MCF 10A (cell line): ENCODE measurements at regions of chr1 and their contacts with region 1.

Region 1: DNA sequence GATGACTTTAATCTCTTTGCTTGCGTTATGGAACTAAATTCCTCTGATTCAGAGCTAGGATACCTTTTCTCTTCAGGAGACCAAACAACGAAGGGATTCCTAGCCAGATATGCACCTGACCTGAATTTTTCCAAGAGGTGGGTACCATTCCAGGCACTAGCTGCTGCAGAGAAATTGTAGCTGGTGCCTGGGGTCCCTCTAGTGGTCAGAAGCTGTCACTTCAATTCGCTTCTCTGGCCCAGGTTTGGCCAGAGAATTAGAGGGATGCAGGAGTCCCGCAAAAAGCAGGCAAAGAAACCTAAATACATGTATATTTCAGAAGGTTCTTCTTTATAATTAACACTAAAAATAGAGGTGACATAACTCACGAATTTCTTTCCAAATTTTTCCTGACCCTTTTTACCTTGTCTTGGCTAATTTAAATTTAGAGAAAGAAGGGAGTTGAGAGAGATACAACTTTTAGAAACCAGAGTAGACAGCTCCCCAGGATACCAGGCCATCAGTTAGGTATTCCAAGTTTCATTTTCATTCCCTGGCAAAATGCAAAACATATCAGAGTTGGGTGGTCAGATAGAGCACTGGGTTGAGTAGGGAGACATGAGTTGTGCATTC is 9.6 kb downstream of the ACKR1 start:
- DNase-seq: peak; percentile 75
- H3K4me3 Mint-ChIP-seq: no peak overlapping the region
- H3K27ac Mint-ChIP-seq: peak overlapping the region; percentile 30
- H3K4me1 Mint-ChIP-seq: peaks cover 42% of the 10 kb centered on the region
- H3K27me3 Mint-ChIP-seq: no peaks in the 10 kb centered on the region
- CTCF ChIP-seq: peak; percentile 92

Region 2: GRCh38 chr1:158686111-158687009 is 527.9 kb before region 1 on chr1 and contains the start of gene SPTA1:
- CTCF ChIA-PET with region 1: no interaction called
- POLR2A ChIA-PET with region 1: no interaction called
- intact Hi-C with region 1: no loop called
- DNase-seq: peak; percentile 16
- H3K4me3 Mint-ChIP-seq: no peak within 1 kb of the TSS
- H3K27ac Mint-ChIP-seq: no peak within 1 kb of the TSS
- H3K4me1 Mint-ChIP-seq: no peaks in the 10 kb centered on the region
- H3K27me3 Mint-ChIP-seq: peaks cover 98% of the 10 kb centered on the region
- CTCF ChIP-seq: no peak
- total RNA-seq, gene SPTA1: not detected in 2 replicates

Region 3: DNA sequence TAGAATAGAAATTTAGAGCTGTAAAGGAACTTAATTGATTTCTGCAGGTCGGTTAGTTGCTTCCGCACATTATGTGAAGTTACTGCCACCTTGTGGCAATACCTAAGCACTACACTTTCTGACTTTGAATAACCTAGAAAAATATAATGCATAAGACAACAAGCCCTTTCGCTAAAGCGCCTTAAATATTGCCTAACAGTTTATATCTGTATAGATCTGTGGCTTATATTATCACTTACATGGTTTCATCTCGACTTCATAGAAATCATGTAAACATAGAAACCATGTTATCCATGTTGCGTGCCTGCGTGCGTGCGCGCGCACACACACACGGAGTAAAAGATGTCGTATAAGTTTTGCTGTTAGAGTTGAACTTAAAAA is 215.5 kb before region 1 on chr1:
- CTCF ChIA-PET with region 1: no interaction called
- POLR2A ChIA-PET with region 1: no interaction called
- intact Hi-C with region 1: no loop called
- DNase-seq: peak; percentile 81
- H3K4me3 Mint-ChIP-seq: peak overlapping the region; percentile 65
- H3K27ac Mint-ChIP-seq: peak overlapping the region; percentile 63
- H3K4me1 Mint-ChIP-seq: peaks cover 22% of the 10 kb centered on the region
- H3K27me3 Mint-ChIP-seq: no peaks in the 10 kb centered on the region
- CTCF ChIP-seq: peak; percentile 95

Region 4: GRCh38 chr1:159161001-159161718 is 53.1 kb before region 1 on chr1:
- CTCF ChIA-PET with region 1: interaction called, 385 read pairs
- POLR2A ChIA-PET with region 1: interaction called, 13 read pairs
- intact Hi-C with region 1: loop called (anchors 1 kb)
- DNase-seq: peak; percentile 99
- H3K4me3 Mint-ChIP-seq: peak overlapping the region; percentile 43
- H3K27ac Mint-ChIP-seq: peak overlapping the region; percentile 69
- H3K4me1 Mint-ChIP-seq: peaks cover 34% of the 10 kb centered on the region
- H3K27me3 Mint-ChIP-seq: peaks cover 36% of the 10 kb centered on the region
- CTCF ChIP-seq: peak; percentile 100

Region 5: GRCh38 chr1:159229486-159229885 is 15.2 kb after region 1 on chr1:
- CTCF ChIA-PET with region 1: interaction called, 120 read pairs
- POLR2A ChIA-PET with region 1: interaction called, 17 read pairs
- intact Hi-C with region 1: no loop called
- DNase-seq: no peak
- H3K4me3 Mint-ChIP-seq: no peak overlapping the region
- H3K27ac Mint-ChIP-seq: peak overlapping the region; percentile 20
- H3K4me1 Mint-ChIP-seq: peaks cover 27% of the 10 kb centered on the region
- H3K27me3 Mint-ChIP-seq: no peaks in the 10 kb centered on the region
- CTCF ChIP-seq: no peak

Region 6: GRCh38 chr1:159282118-159282517 is 67.9 kb after region 1 on chr1:
- CTCF ChIA-PET with region 1: interaction called, 11 read pairs
- POLR2A ChIA-PET with region 1: no interaction called
- intact Hi-C with region 1: no loop called
- DNase-seq: peak; percentile 36
- H3K4me3 Mint-ChIP-seq: no peak overlapping the region
- H3K27ac Mint-ChIP-seq: no peak overlapping the region
- H3K4me1 Mint-ChIP-seq: peaks cover 36% of the 10 kb centered on the region
- H3K27me3 Mint-ChIP-seq: no peaks in the 10 kb centered on the region
- CTCF ChIP-seq: no peak

Region 7: GRCh38 chr1:159686599-159687299 is 472.5 kb after region 1 on chr1:
- CTCF ChIA-PET with region 1: interaction called, 11 read pairs
- POLR2A ChIA-PET with region 1: no interaction called
- intact Hi-C with region 1: no loop called
- DNase-seq: no peak
- H3K4me3 Mint-ChIP-seq: no peak overlapping the region
- H3K27ac Mint-ChIP-seq: no peak overlapping the region
- H3K4me1 Mint-ChIP-seq: no peaks in the 10 kb centered on the region
- H3K27me3 Mint-ChIP-seq: no peaks in the 10 kb centered on the region
- CTCF ChIP-seq: no peak

Region 8: DNA sequence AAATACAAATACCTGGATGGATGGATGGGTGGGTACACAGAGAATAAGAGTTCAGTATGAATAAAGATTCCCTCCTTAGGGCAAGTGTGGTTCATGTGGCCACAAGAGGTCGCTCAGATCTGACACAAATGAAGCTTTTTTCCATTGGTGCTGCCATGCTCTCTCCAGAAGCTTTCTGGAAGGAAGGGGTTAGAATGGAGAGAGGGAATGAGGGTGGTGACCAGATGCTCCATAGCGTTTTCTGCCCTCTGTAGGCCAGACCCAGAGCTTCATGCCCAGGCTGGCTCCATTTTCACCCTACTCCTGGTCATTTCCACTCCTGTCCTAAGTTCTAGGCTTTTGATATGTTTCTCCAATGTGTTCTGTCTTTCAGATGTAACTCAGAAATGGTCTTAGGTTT is 584.6 kb after region 1 on chr1:
- CTCF ChIA-PET with region 1: interaction called, 42 read pairs
- POLR2A ChIA-PET with region 1: no interaction called
- intact Hi-C with region 1: loop called (anchors 5 kb)
- DNase-seq: peak; percentile 95
- H3K4me3 Mint-ChIP-seq: no peak overlapping the region
- H3K27ac Mint-ChIP-seq: no peak overlapping the region
- H3K4me1 Mint-ChIP-seq: no peaks in the 10 kb centered on the region
- H3K27me3 Mint-ChIP-seq: no peaks in the 10 kb centered on the region
- CTCF ChIP-seq: peak; percentile 83

Region 9: DNA sequence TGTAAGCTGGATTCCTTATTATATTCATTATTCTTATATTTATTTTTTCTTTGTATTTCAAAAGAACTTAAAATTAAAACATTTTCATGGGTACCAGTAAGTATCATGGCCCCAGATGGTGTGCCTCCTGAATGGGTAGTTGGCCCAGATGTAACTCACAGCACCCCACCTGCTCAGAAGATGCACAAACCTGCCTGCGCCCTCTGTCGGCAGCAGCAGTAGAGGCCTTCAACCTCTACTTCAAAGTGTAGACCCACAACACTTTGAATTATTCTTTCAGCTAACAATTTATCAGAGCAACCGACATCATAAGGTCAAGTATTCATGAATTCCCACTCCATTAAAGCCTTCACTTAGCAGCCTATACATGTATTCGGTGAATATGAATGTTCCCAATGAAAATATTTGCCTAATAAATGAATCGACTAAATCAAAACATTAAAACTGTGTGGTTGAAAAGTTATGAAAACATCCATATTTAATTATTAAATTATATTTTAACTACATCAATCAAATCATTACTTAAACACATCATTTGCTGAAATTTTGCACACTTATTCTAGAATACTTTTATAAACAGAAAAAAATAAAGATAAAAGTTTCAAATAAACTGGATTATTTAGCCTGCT is 792.2 kb after region 1 on chr1:
- CTCF ChIA-PET with region 1: interaction called, 33 read pairs
- POLR2A ChIA-PET with region 1: no interaction called
- intact Hi-C with region 1: no loop called
- DNase-seq: peak; percentile 87
- H3K4me3 Mint-ChIP-seq: no peak overlapping the region
- H3K27ac Mint-ChIP-seq: no peak overlapping the region
- H3K4me1 Mint-ChIP-seq: peaks cover 11% of the 10 kb centered on the region
- H3K27me3 Mint-ChIP-seq: no peaks in the 10 kb centered on the region
- CTCF ChIP-seq: peak; percentile 99